Gastrocnemius medialis (tissue), 4 donors: ENCODE measurements at regions of chr12 and their contacts with region 1.

Region 1: GRCh38 chr12:94762259-94762942 is 112.0 kb upstream of the TMCC3 start:
- DNase-seq: no peak
- ATAC-seq: no peak
- H3K4me3 ChIP-seq: no peak overlapping the region
- H3K27ac ChIP-seq: no peak overlapping the region
- H3K4me1 ChIP-seq: no peaks in the 10 kb centered on the region
- H3K27me3 ChIP-seq: no peaks in the 10 kb centered on the region
- CTCF ChIP-seq: no peak
- POLR2A ChIP-seq: no peak

Region 2: GRCh38 chr12:94133964-94134795 is 628.2 kb before region 1 on chr12:
- in situ Hi-C with region 1: loop called in 3 of 4 experiments (anchors 25 kb)
- intact Hi-C with region 1: no loop called
- DNase-seq: no peak
- ATAC-seq: peak; percentile 82 to 83
- H3K4me3 ChIP-seq: no peak overlapping the region
- H3K27ac ChIP-seq: no peak overlapping the region
- H3K4me1 ChIP-seq: no peaks in the 10 kb centered on the region
- H3K27me3 ChIP-seq: peaks cover 0 to 3% (median 0%) of the 10 kb centered on the region in 3 donors
- CTCF ChIP-seq: peak; percentile 46 to 81 (median 57)
- POLR2A ChIP-seq: no peak

Region 3: DNA sequence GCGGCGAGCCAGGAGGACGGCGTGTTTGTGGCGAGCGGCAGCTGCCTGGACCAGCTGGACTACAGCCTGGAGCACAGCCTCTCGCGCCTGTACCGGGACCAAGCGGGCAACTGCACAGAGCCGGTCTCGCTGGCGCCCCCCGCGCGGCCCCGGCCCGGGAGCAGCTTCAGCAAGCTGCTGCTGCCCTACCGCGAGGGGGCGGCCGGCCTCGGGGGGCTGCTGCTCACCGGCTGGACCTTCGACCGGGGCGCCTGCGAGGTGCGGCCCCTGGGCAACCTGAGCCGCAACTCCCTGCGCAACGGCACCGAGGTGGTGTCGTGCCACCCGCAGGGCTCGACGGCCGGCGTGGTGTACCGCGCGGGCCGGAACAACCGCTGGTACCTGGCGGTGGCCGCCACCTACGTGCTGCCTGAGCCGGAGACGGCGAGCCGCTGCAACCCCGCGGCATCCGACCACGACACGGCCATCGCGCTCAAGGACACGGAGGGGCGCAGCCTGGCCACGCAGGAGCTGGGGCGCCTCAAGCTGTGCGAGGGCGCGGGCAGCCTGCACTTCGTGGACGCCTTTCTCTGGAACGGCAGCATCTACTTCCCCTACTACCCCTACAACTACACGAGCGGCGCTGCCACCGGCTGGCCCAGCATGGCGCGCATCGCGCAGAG is 613.2 kb before region 1 on chr12:
- in situ Hi-C with region 1: loop called (anchors 25 kb)
- intact Hi-C with region 1: no loop called
- DNase-seq: no peak
- ATAC-seq: peak in 1 of 2 donors; percentile 38
- H3K4me3 ChIP-seq: peak overlapping the region; percentile 43 to 60 (median 60)
- H3K27ac ChIP-seq: no peak overlapping the region
- H3K4me1 ChIP-seq: peaks cover 4 to 5% of the 10 kb centered on the region in 2 donors
- H3K27me3 ChIP-seq: peaks cover 7 to 23% (median 18%) of the 10 kb centered on the region in 3 donors
- CTCF ChIP-seq: no peak
- POLR2A ChIP-seq: no peak

Region 4: DNA sequence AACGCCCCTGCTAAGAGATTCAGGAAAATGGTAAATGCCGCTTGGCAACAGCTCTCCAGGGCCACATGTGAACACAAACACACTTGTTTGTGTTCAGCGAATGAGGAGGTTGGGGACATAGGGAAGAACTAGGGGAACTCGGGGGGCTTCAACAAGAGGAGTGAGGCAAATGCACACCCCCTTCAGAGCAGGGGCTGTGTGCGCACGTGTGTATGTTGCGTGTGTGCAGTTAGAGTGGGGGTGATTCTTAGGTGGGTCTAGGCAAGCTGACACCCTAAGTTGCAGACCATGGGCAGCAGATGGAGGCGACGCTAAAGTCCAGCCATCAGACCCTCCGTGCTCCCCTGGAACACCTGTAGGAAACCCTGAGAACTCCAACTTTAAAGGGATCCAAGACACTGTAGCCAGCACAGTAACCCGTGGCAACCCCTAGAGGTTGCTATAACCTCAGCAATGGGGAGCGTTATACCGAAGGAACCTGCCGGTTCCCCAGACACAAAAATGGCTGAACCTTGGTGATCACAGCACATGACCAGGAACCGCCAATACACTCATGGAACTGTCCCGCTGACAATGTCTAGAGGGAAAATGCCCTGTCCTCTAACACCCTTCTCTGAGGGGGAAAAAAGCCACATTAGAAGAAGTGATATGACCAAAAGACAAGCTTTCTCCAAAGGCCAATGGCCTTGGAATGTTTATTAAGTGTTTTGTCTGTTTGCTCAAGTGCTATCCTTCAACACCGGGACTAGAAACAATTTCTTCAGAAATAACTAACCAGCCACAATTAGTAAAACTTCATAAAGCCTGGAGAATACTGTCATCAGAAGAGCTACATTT is 216.2 kb before region 1 on chr12:
- in situ Hi-C with region 1: loop called (anchors 5 to 10 kb)
- intact Hi-C with region 1: loop called (anchors 1 kb)
- DNase-seq: peak; percentile 23 to 35
- ATAC-seq: peak; percentile 86 to 96
- H3K4me3 ChIP-seq: no peak overlapping the region
- H3K27ac ChIP-seq: no peak overlapping the region
- H3K4me1 ChIP-seq: no peaks in the 10 kb centered on the region
- H3K27me3 ChIP-seq: no peaks in the 10 kb centered on the region
- CTCF ChIP-seq: peak; percentile 65 to 81 (median 76)
- POLR2A ChIP-seq: no peak

Region 5: GRCh38 chr12:94560431-94561221 is 201.8 kb before region 1 on chr12:
- in situ Hi-C with region 1: loop called in 1 of 4 experiments (anchors 10 kb)
- intact Hi-C with region 1: loop called (anchors 5 kb)
- DNase-seq: no peak
- ATAC-seq: peak in 1 of 2 donors; percentile 14
- H3K4me3 ChIP-seq: no peak overlapping the region
- H3K27ac ChIP-seq: no peak overlapping the region
- H3K4me1 ChIP-seq: peaks cover 8 to 18% of the 10 kb centered on the region in 2 donors
- H3K27me3 ChIP-seq: no peaks in the 10 kb centered on the region
- CTCF ChIP-seq: no peak
- POLR2A ChIP-seq: no peak

Region 6: DNA sequence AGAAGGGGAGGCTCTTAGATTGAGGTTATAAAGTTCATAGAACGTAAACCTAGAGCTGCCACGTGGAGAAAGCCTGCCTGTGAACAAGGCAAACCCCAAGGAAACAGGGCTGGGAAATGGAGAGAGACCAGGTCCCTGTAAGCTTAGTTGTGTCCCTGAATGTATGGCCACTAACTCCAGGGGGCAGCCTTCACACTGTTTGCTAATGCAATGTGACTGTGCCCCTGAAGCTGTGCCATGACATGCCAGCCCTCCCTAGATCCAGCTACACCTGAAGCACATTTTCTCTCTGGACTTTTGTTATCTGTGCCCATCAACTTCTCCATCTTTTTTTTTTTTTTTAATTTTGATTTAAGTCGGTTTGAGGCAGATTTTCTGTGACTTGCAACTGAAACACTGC is 51.5 kb before region 1 on chr12:
- in situ Hi-C with region 1: no loop called
- intact Hi-C with region 1: loop called (anchors 5 kb)
- DNase-seq: no peak
- ATAC-seq: no peak
- H3K4me3 ChIP-seq: no peak overlapping the region
- H3K27ac ChIP-seq: no peak overlapping the region
- H3K4me1 ChIP-seq: peaks cover 29 to 30% of the 10 kb centered on the region in 2 donors
- H3K27me3 ChIP-seq: no peaks in the 10 kb centered on the region
- CTCF ChIP-seq: peak in 2 of 5 experiments; percentile 27 to 38
- POLR2A ChIP-seq: no peak

Region 7: GRCh38 chr12:95298916-95299315 is 536.5 kb after region 1 on chr12:
- in situ Hi-C with region 1: no loop called
- intact Hi-C with region 1: no loop called
- DNase-seq: no peak
- ATAC-seq: no peak
- H3K4me3 ChIP-seq: no peak overlapping the region
- H3K27ac ChIP-seq: no peak overlapping the region
- H3K4me1 ChIP-seq: no peaks in the 10 kb centered on the region
- H3K27me3 ChIP-seq: no peaks in the 10 kb centered on the region
- CTCF ChIP-seq: no peak
- POLR2A ChIP-seq: no peak